Activated CD4-positive, alpha-beta T cell treated with anti-CD3 and anti-CD28 coated beads for 36 hours (primary cell): ENCODE measurements at regions of chr1 and their contacts with region 1.

Region 1: DNA sequence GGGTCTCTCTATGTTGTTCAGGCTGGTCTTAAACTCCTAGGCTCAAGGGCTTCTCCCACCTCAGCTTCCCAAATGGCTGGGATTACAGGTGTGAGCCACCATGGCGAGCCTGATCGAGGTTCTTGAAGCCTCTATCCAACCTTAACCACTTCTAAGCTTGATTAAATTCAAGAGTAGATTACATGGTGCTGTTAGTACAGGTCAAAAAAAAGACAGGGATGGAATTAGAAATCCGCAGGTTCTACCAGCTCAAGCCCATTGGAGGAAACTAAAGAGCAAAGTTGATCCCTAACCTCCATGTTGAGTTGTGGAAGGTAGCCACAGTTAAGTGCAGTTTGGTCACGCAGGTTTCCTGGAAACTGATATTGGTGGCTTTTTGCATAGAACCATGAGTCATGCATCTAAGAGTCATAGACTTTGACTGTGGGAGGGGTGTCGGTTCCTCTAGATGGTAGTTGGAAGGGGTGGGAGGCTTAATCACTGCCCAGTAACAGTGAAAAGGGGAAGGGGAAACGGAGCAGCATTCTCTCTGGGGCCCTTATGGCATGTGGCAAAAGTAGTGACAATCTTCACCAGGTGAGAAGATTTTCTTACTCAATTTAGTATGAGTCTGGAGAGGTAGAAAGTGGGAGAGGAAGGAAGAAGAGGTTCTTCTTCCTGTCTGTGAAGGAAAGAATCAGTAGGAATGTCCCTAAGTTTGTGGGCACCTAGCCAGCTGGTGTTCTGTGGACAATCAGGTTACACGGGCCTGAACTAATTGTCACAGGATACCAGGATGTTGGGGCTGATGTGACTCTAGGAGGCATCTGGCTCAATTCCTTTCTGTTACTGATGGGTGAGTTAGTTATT is 7.0 kb downstream of the CD53 start:
- DNase-seq: peak; percentile 77
- ATAC-seq: peak; percentile 66
- H3K4me3 Mint-ChIP-seq: peak overlapping the region; percentile 85
- H3K27ac Mint-ChIP-seq: peak overlapping the region; percentile 100
- H3K4me1 Mint-ChIP-seq: peaks cover 63% of the 10 kb centered on the region
- H3K27me3 Mint-ChIP-seq: no peaks in the 10 kb centered on the region

Region 2: GRCh38 chr1:110630839-110631663 is 248.9 kb before region 1 on chr1:
- CTCF ChIA-PET with region 1: no interaction called
- POLR2A ChIA-PET with region 1: no interaction called
- intact Hi-C with region 1: loop called (anchors 1 to 5 kb)
- DNase-seq: peak; percentile 93
- ATAC-seq: peak; percentile 76
- H3K4me3 Mint-ChIP-seq: no peak overlapping the region
- H3K27ac Mint-ChIP-seq: no peak overlapping the region
- H3K4me1 Mint-ChIP-seq: peaks cover 55% of the 10 kb centered on the region
- H3K27me3 Mint-ChIP-seq: no peaks in the 10 kb centered on the region

Region 3: GRCh38 chr1:110896090-110896489 is 16.1 kb after region 1 on chr1:
- CTCF ChIA-PET with region 1: interaction called, 5 read pairs
- POLR2A ChIA-PET with region 1: interaction called, 5 read pairs
- intact Hi-C with region 1: loop called (anchors 1 to 2 kb)
- DNase-seq: no peak
- ATAC-seq: no peak
- H3K4me3 Mint-ChIP-seq: no peak overlapping the region
- H3K27ac Mint-ChIP-seq: peak overlapping the region; percentile 88
- H3K4me1 Mint-ChIP-seq: peaks cover 84% of the 10 kb centered on the region
- H3K27me3 Mint-ChIP-seq: no peaks in the 10 kb centered on the region

Region 4: DNA sequence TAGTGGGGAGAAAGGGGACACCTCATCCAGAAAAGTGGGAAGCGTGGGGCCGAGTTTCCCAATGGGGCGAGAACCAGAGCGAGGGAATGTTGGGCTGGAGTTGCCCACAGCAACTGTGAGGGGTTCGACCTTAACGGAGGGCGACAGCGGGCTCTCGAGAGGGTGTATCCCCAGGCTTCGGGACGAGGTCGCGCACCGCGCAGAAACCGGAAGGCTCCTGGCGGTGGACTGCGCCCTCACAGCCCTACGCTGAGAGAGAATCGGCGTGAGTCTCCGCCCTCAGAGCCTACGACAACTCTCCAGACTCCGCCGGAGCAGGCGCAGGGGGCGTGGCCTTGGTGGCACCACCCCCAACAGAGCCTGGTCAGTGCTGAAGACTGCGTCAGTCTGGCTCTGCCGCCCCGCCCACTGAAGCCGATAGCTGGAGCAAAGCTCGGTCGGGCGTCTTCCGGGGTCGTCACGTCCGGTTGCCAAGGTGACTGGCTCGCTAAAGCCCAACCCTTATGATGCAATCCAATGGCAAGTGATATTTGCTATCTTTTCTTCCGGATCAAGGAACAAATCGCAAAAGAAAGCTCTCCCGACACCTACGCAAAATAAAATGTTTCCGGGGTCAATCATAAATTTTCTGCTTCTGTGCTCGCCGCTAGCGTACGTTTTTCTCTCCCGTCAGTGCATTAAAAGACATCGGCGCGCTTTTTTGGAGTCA is 83.9 kb after region 1 on chr1 and contains the start of gene LRIF1:
- CTCF ChIA-PET with region 1: interaction called, 4 read pairs
- POLR2A ChIA-PET with region 1: interaction called, 5 read pairs
- intact Hi-C with region 1: loop called (anchors 1 kb)
- DNase-seq: peak; percentile 100
- ATAC-seq: peak; percentile 99
- H3K4me3 Mint-ChIP-seq: peak within 1 kb of the TSS; percentile 78
- H3K27ac Mint-ChIP-seq: peak within 1 kb of the TSS; percentile 94
- H3K4me1 Mint-ChIP-seq: peaks cover 30% of the 10 kb centered on the region
- H3K27me3 Mint-ChIP-seq: peaks cover 7% of the 10 kb centered on the region
- total RNA-seq, gene LRIF1: 15.1 to 15.4 TPM

Region 5: DNA sequence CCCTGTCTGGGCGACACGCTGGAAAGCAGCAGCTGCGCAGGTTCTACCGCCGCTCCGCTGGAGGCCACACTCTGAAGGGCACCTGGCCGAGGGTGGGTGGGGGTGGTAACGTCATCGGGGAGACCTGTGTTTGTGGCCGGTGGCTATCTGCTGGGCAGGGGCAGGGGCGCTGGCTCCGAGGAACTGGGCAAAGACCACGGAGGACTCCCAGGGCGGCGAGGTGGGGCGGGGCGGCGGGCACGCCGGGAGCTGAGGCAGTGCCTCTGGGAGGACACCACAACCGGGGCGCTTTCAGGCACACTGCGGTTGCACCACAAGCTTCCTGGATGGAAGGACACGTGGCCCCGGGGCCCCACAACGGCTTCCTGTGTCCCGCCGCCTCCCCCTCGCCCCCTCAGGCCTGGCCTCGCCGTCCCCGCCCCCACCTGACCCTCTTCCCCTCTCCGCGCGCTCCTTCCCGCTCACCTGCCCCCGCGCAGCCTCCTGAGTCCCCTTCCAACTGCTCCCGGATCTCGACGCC is 323.8 kb after region 1 on chr1:
- CTCF ChIA-PET with region 1: no interaction called
- POLR2A ChIA-PET with region 1: no interaction called
- intact Hi-C with region 1: loop called (anchors 5 kb)
- DNase-seq: peak; percentile 92
- ATAC-seq: peak; percentile 27
- H3K4me3 Mint-ChIP-seq: peak overlapping the region; percentile 96
- H3K27ac Mint-ChIP-seq: peak overlapping the region; percentile 98
- H3K4me1 Mint-ChIP-seq: peaks cover 56% of the 10 kb centered on the region
- H3K27me3 Mint-ChIP-seq: no peaks in the 10 kb centered on the region

Region 6: GRCh38 chr1:111214074-111214801 is 334.3 kb after region 1 on chr1:
- CTCF ChIA-PET with region 1: no interaction called
- POLR2A ChIA-PET with region 1: interaction called, 3 read pairs
- intact Hi-C with region 1: loop called in 1 of 2 experiments (anchors 1 kb)
- DNase-seq: no peak
- ATAC-seq: peak; percentile 18
- H3K4me3 Mint-ChIP-seq: peak overlapping the region; percentile 68
- H3K27ac Mint-ChIP-seq: peak overlapping the region; percentile 97
- H3K4me1 Mint-ChIP-seq: peaks cover 80% of the 10 kb centered on the region
- H3K27me3 Mint-ChIP-seq: no peaks in the 10 kb centered on the region

Region 7: DNA sequence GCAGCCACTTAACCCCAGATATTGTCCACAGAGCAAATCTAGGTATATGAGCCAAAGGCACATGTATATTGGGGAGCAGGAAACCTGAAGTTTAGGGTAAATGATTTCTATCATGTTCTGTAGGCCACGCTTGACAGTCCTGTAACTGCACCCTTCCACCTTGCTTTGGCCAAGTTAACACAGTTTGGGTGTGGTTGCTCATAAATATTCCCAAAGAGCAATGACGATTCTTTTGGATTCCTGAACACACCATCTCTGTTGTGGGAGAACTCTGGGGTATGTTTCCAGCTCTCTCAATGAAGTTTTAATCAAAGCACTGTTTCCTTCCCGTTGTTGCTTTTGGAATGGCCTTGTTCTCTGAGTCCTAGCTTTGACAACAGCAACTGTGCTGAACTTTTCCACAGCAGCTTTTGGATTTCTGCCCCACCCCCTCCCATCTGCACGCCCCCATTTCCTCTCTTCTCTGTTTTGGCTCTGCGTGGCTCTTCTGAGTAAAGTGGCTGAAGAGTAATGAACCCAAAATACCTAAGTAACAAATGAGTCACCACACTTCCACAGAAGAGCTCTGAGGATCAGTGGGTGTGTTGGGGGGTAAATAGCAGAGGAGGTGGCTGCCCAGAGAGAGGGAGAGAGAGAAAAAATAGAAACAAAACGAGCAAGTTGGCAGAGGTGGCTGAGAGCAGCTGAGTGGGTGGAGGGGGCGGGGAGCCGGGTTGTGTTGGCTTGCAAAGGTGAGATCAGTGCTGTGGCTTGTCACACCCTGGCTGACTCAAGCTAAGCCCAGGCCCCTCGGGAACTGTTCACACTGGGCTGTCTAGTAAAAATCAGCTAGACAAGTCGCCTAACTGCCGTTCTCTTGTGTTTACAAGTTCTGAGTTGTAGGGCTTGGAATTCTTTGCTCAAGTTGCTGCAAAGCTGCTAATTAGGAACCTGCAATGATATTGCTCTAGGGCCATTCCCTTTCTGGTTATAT is 712.7 kb after region 1 on chr1:
- CTCF ChIA-PET with region 1: no interaction called
- POLR2A ChIA-PET with region 1: no interaction called
- intact Hi-C with region 1: loop called in 1 of 2 experiments (anchors 5 kb)
- DNase-seq: peak; percentile 98
- ATAC-seq: peak; percentile 93
- H3K4me3 Mint-ChIP-seq: peak overlapping the region; percentile 63
- H3K27ac Mint-ChIP-seq: peak overlapping the region; percentile 95
- H3K4me1 Mint-ChIP-seq: peaks cover 73% of the 10 kb centered on the region
- H3K27me3 Mint-ChIP-seq: no peaks in the 10 kb centered on the region